Activated naive CD4-positive, alpha-beta T cell treated with anti-CD3 and anti-CD28 coated beads for 36 hours (primary cell): ENCODE measurements at regions of chr10 and their contacts with region 1.

Region 1: DNA sequence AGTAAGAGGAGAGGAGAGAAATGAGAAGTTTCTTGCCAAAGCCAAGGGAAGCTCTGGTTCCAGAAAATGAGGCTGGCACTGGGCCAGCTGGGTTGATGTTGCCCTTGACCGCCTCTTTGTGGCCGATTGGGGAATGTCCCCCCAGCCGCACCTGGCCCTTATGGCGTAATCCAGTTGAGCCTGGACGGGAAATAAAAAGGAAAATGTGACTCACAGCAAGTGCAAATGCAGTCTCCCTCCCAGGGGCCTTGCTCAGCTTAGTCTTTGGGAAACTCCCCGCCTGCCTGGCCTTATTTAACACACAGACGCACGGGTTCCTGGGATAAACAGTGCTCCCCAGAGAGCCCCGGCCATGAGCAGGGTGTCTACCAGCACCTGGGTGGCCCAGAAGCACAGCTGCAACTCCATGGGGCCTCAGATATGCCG is 174.8 kb downstream of the KIAA1217 start:
- DNase-seq: peak; percentile 71
- H3K4me3 Mint-ChIP-seq: peak overlapping the region; percentile 21
- H3K27ac Mint-ChIP-seq: peak overlapping the region; percentile 86
- H3K4me1 Mint-ChIP-seq: peaks cover 12% of the 10 kb centered on the region
- H3K27me3 Mint-ChIP-seq: peaks cover 21% of the 10 kb centered on the region

Region 2: GRCh38 chr10:24465891-24466818 is 82.5 kb after region 1 on chr10:
- CTCF ChIA-PET with region 1: no interaction called
- intact Hi-C with region 1: loop called (anchors 1 kb)
- DNase-seq: peak; percentile 76
- H3K4me3 Mint-ChIP-seq: no peak overlapping the region
- H3K27ac Mint-ChIP-seq: peak overlapping the region; percentile 28
- H3K4me1 Mint-ChIP-seq: peaks cover 31% of the 10 kb centered on the region
- H3K27me3 Mint-ChIP-seq: peaks cover 8% of the 10 kb centered on the region

Region 3: DNA sequence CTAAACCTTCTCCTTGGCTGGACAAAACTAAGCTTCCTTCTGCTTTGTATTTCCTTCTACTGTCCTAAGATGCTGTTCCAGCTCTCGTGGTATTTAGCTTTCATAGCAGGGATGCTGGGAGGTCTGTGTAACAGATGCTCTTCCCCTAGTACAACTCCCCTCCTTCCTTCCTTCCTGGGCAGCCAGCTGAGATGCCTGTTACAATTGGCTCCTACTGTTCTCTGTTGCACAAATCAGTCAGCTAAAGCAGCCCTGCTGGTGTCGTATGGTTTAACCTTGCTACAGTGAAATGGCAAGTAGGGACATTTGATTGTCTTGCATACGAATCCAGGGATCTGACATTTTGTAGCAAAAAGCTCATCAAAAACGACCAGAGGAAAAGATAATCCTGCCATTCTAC is 196.2 kb after region 1 on chr10:
- CTCF ChIA-PET with region 1: no interaction called
- intact Hi-C with region 1: no loop called
- DNase-seq: no peak
- H3K4me3 Mint-ChIP-seq: no peak overlapping the region
- H3K27ac Mint-ChIP-seq: no peak overlapping the region
- H3K4me1 Mint-ChIP-seq: peaks cover 10% of the 10 kb centered on the region
- H3K27me3 Mint-ChIP-seq: peaks cover 7% of the 10 kb centered on the region